ENCODE measurements at regions of chr17 and their contacts with region 1.

Region 1: GRCh38 chr17:55533608-55534007 is 22.4 kb upstream of the SMIM36 start:
- DNase-seq: no peak
- ATAC-seq: no peak
- H3K4me3 ChIP-seq: no peak overlapping the region
- H3K27ac ChIP-seq: no peak overlapping the region
- H3K4me1 ChIP-seq: no peaks in the 10 kb centered on the region
- H3K27me3 ChIP-seq: no peaks in the 10 kb centered on the region
- CTCF ChIP-seq: no peak
- POLR2A ChIP-seq: no peak

Region 2: DNA sequence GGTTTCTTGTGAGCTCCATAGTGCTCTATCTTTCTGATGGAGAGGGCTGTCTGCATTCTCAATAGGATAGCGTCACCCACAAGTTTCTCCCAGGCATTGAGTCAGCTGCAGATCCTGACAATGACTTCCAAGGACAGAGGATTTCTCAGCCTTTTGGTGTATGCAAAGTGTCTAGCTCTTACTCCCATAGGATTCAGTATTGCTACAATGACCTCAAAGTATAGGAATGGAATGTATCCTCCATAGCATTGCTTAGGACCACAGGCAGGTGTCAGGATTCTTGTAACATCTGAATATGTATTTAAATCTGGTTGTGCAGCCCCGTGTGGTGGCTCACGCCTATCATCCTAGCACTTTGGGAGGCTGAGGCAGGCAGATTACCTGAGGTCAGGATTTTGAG is 54.6 kb before region 1 on chr17:
- intact Hi-C with region 1: no loop called
- DNase-seq: no peak
- ATAC-seq: no peak
- H3K4me3 ChIP-seq: no peak overlapping the region
- H3K27ac ChIP-seq: no peak overlapping the region
- H3K4me1 ChIP-seq: no peaks in the 10 kb centered on the region
- H3K27me3 ChIP-seq: no peaks in the 10 kb centered on the region
- CTCF ChIP-seq: no peak
- POLR2A ChIP-seq: no peak

Region 3: DNA sequence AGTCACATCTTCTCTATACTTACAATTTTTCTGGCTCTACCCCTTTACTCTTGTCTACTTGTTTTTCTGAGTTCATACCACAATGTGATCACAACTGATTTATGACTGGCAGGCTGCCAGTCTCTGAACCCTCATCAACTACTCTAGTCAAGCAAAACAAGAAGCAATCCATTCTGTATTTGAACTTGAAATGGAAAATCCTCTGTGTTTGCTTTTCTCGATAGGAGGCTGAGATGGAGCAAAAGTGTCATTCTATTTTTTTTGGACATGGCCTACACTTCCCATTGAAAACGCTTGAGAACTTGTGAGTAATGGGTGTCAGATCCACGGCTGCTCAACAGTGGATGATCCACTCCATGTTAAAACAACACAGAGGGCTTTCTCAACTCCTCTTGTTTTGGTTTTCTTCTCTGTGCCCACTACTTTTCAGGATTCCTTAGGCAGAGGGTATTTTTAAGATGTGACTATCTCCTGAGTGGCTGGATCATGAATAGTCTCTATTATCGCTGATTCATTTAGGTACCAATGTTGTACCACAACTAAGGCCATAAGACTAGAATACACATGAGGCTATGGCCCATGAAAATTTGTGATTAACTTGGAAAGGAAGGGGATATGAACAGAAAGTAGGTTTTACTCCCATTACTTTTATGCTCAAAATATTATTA is 177.4 kb after region 1 on chr17:
- intact Hi-C with region 1: no loop called
- DNase-seq: peak in 1 of 4 donors; percentile 14
- ATAC-seq: no peak
- H3K4me3 ChIP-seq: no peak overlapping the region
- H3K27ac ChIP-seq: no peak overlapping the region
- H3K4me1 ChIP-seq: no peaks in the 10 kb centered on the region
- H3K27me3 ChIP-seq: no peaks in the 10 kb centered on the region
- CTCF ChIP-seq: no peak
- POLR2A ChIP-seq: no peak

Region 4: DNA sequence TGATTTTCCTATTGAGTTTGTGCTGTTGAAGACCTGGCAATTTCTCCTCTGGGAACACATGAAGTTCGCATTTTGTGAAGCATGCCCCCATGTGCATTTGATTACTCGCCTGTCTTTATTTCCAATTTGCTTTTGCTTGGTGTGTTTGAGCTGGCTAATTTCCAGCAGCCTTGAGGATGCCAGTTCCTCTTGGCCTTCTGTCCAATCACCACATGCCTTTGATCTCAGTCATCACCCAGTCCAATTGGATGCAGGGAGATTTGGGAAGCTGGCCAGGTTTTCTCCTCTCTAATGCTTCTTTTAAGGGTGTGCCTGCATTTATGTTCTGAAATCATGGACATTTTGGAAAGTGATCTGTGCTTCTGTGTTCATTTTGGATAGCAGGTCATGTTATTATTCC is 192.8 kb after region 1 on chr17:
- intact Hi-C with region 1: loop called (anchors 10 kb)
- DNase-seq: peak in 3 of 4 donors; percentile 19 to 38 (median 27)
- ATAC-seq: no peak
- H3K4me3 ChIP-seq: no peak overlapping the region
- H3K27ac ChIP-seq: no peak overlapping the region
- H3K4me1 ChIP-seq: no peaks in the 10 kb centered on the region
- H3K27me3 ChIP-seq: no peaks in the 10 kb centered on the region
- CTCF ChIP-seq: no peak
- POLR2A ChIP-seq: no peak

Region 5: GRCh38 chr17:56203430-56203829 is 669.8 kb after region 1 on chr17:
- intact Hi-C with region 1: no loop called
- DNase-seq: no peak
- ATAC-seq: no peak
- H3K4me3 ChIP-seq: no peak overlapping the region
- H3K27ac ChIP-seq: no peak overlapping the region
- H3K4me1 ChIP-seq: no peaks in the 10 kb centered on the region
- H3K27me3 ChIP-seq: no peaks in the 10 kb centered on the region
- CTCF ChIP-seq: no peak
- POLR2A ChIP-seq: no peak